ENCODE measurements at regions of chr15 and their contacts with region 1.

Region 1: GRCh38 chr15:89750560-89751542 is at the start of gene MESP1:
- DNase-seq: peak; percentile 93
- ATAC-seq: peak; percentile 94
- H3K4me3 Mint-ChIP-seq: peak within 1 kb of the TSS; percentile 73
- H3K27ac Mint-ChIP-seq: no peak within 1 kb of the TSS
- H3K4me1 Mint-ChIP-seq: peaks cover 4% of the 10 kb centered on the region
- H3K27me3 Mint-ChIP-seq: peaks cover 11% of the 10 kb centered on the region
- total RNA-seq, gene MESP1: 2.9 to 4.6 TPM

Region 2: GRCh38 chr15:89690276-89691218 is 60.3 kb before region 1 on chr15 and contains the starts of genes PEX11A and WDR93:
- CTCF ChIA-PET with region 1: no interaction called
- POLR2A ChIA-PET with region 1: no interaction called
- intact Hi-C with region 1: loop called in 1 of 2 experiments (anchors 1 kb)
- DNase-seq: peak; percentile 87
- ATAC-seq: peak; percentile 92
- H3K4me3 Mint-ChIP-seq: peak within 1 kb of the TSS; percentile 85
- H3K27ac Mint-ChIP-seq: peak within 1 kb of the TSS; percentile 82
- H3K4me1 Mint-ChIP-seq: peaks cover 12% of the 10 kb centered on the region
- H3K27me3 Mint-ChIP-seq: no peaks in the 10 kb centered on the region
- total RNA-seq, gene PEX11A: 4.7 to 5.3 TPM
- total RNA-seq, gene WDR93: not detected

Measured in activated CD4-positive, alpha-beta T cell treated with anti-CD3 and anti-CD28 coated beads for 36 hours (primary cell).